Activated CD4-positive, alpha-beta T cell treated with anti-CD3 and anti-CD28 coated beads for 36 hours (primary cell): ENCODE measurements at regions of chr1 and their contacts with region 1.

Region 1: DNA sequence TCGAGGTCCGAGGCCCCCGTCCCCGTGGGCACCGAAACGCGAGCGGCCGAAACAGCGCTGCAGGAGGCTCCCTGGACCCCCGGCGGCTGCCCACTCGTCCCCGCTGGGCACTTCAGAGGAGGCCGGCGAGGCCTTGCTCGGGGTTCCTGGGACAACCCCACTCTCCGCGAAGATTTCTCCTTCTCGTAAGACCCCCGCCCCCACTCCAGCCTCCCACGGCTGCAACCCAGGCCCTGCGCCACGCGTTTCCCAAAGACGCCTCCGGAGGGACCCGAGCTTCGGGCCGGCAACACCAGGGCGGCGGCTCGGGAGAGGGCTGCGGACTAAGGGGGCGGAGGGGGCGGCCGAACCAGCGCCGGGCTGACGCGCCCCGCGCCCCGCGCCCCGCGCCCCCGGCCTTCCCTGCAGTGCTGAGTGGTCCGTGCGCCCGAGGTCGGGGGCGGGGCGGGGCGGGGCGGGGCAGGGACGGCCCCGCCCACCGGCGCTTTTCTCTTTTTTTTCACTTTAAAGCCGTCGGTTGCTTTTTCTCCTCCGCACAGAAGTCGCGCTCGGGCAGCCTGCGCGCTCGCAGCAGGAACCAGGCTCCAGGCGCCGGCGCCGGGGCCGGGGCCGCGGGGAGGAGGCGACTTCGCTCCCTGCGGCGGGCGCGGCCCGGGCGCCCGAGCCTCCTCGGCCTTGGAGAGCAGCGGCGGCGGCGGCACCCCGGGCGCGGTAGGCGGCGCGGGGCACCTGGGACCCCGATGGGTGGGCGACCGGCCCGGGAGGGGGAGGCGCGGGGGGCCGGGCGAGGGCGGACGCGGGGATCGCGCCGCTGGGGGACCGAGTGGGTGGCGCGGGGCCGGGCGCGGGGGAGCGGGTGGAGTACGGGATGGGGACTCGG is at the start of gene SPSB1:
- DNase-seq: peak; percentile 84
- ATAC-seq: peak; percentile 40
- H3K4me3 Mint-ChIP-seq: peak within 1 kb of the TSS; percentile 39
- H3K27ac Mint-ChIP-seq: no peak within 1 kb of the TSS
- H3K4me1 Mint-ChIP-seq: peaks cover 11% of the 10 kb centered on the region
- H3K27me3 Mint-ChIP-seq: no peaks in the 10 kb centered on the region
- total RNA-seq, gene SPSB1: 5.7 to 6.8 TPM

Region 2: DNA sequence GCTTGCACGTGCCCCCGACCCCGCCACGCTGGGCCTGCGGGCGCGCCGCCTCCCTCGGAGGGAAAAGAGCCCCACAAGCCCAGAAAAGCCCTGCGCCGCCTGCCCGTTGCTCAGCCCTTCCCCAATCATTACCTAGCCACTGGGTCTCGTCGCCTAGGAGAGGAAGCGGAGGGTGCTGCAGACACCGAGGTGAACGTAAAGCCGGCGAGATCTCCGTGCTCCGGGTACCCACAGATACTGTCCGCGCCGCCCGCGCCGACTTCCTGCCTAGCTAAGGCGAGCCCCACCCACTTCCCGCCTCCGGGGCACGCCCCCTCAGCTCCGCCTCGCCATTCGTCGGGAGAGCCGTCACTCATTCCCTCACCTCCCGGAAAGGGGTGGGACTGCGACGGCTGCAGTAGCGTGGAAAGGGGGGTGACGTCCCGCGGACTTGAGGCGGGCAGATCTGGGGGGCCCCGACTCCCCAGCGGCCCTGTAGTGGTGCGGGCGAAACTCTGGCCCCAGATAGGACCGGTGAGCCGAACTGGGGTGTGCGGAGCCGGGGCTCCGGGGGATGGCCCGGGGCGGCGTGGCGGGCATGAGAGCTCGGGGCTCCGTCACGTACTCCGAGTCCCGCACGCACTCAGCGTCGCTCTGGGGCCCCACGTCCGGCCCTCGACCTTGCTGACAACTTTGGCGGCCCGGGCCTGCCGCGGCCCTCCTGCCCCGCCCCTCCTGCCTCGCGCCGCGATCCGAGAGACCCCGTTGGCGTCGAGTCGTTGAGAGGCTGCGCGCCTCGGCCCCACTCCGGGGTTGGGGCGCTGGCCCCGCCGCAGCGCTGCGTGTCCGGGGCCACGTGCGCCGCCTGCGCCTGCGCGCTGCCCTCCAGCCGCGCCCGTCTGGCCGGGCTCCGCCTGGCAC is 413.9 kb before region 1 on chr1 and contains the start of gene ENO1:
- CTCF ChIA-PET with region 1: no interaction called
- POLR2A ChIA-PET with region 1: no interaction called
- intact Hi-C with region 1: loop called in 1 of 2 experiments (anchors 2 kb)
- DNase-seq: peak; percentile 99
- ATAC-seq: peak; percentile 72
- H3K4me3 Mint-ChIP-seq: peak within 1 kb of the TSS; percentile 90
- H3K27ac Mint-ChIP-seq: peak within 1 kb of the TSS; percentile 99
- H3K4me1 Mint-ChIP-seq: peaks cover 35% of the 10 kb centered on the region
- H3K27me3 Mint-ChIP-seq: no peaks in the 10 kb centered on the region
- total RNA-seq, gene ENO1: 2,573 to 3,583 TPM

Region 3: DNA sequence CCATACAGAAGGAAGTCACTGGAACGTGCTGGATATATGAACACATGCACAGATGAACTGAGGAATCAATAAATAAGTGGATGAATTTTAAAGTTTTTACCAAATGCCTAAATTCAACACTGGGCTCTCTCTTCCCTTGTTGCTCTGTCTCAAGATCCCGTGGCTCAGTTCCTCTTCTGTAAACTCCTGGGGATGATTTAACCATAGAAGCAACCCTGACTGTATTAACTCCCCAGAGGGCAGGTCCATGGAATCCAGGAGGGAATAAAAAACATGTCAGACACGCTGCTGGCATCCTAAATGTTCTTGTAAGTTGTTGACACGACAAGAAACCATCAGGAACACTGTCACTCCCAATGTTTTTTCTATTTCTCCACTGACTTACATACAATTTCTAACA is 118.4 kb before region 1 on chr1:
- CTCF ChIA-PET with region 1: no interaction called
- POLR2A ChIA-PET with region 1: no interaction called
- intact Hi-C with region 1: no loop called
- DNase-seq: no peak
- ATAC-seq: no peak
- H3K4me3 Mint-ChIP-seq: no peak overlapping the region
- H3K27ac Mint-ChIP-seq: no peak overlapping the region
- H3K4me1 Mint-ChIP-seq: no peaks in the 10 kb centered on the region
- H3K27me3 Mint-ChIP-seq: peaks cover 8% of the 10 kb centered on the region

Region 4: DNA sequence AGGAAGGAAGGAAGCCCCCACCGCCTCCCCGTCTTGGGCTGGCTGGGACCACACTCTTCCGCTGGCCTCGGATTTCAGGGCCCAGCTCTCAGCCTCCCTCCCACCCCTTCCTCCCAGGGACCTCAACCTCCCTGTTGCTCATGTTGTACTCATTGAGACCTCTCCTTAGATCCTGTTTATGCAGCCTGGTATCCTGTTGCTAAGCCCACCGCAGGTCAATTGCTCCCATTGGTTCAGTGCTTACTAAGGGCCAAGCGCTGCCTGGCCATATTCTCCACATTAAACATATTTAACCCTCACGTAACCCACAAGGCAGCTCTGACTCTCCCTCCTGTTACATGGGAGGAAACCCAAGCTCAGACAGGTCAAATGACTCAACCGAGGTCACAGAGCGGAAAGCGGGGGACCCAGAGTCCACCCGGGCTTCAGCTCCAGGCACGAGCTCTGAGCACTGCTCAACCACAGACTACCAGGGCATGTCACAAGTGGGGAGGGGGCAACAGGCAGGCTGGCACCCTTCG is 81.2 kb before region 1 on chr1:
- CTCF ChIA-PET with region 1: no interaction called
- POLR2A ChIA-PET with region 1: no interaction called
- intact Hi-C with region 1: no loop called
- DNase-seq: no peak
- ATAC-seq: no peak
- H3K4me3 Mint-ChIP-seq: no peak overlapping the region
- H3K27ac Mint-ChIP-seq: no peak overlapping the region
- H3K4me1 Mint-ChIP-seq: peaks cover 4% of the 10 kb centered on the region
- H3K27me3 Mint-ChIP-seq: peaks cover 22% of the 10 kb centered on the region

Region 5: GRCh38 chr1:9269078-9269501 is 23.5 kb before region 1 on chr1:
- CTCF ChIA-PET with region 1: interaction called, 27 read pairs
- POLR2A ChIA-PET with region 1: no interaction called
- intact Hi-C with region 1: loop called (anchors 1 to 2 kb)
- DNase-seq: no peak
- ATAC-seq: no peak
- H3K4me3 Mint-ChIP-seq: no peak overlapping the region
- H3K27ac Mint-ChIP-seq: no peak overlapping the region
- H3K4me1 Mint-ChIP-seq: peaks cover 2% of the 10 kb centered on the region
- H3K27me3 Mint-ChIP-seq: no peaks in the 10 kb centered on the region

Region 6: GRCh38 chr1:9317591-9318417 is 25.2 kb after region 1 on chr1:
- CTCF ChIA-PET with region 1: interaction called, 8 read pairs
- POLR2A ChIA-PET with region 1: no interaction called
- intact Hi-C with region 1: loop called (anchors 1 kb)
- DNase-seq: peak; percentile 42
- ATAC-seq: no peak
- H3K4me3 Mint-ChIP-seq: peak overlapping the region; percentile 18
- H3K27ac Mint-ChIP-seq: peak overlapping the region; percentile 42
- H3K4me1 Mint-ChIP-seq: peaks cover 38% of the 10 kb centered on the region
- H3K27me3 Mint-ChIP-seq: no peaks in the 10 kb centered on the region

Region 7: GRCh38 chr1:9455487-9456234 is 163.1 kb after region 1 on chr1:
- CTCF ChIA-PET with region 1: interaction called, 37 read pairs
- POLR2A ChIA-PET with region 1: interaction called, 6 read pairs
- intact Hi-C with region 1: loop called (anchors 1 kb)
- DNase-seq: peak; percentile 84
- ATAC-seq: peak; percentile 80
- H3K4me3 Mint-ChIP-seq: no peak overlapping the region
- H3K27ac Mint-ChIP-seq: no peak overlapping the region
- H3K4me1 Mint-ChIP-seq: no peaks in the 10 kb centered on the region
- H3K27me3 Mint-ChIP-seq: no peaks in the 10 kb centered on the region

Region 8: DNA sequence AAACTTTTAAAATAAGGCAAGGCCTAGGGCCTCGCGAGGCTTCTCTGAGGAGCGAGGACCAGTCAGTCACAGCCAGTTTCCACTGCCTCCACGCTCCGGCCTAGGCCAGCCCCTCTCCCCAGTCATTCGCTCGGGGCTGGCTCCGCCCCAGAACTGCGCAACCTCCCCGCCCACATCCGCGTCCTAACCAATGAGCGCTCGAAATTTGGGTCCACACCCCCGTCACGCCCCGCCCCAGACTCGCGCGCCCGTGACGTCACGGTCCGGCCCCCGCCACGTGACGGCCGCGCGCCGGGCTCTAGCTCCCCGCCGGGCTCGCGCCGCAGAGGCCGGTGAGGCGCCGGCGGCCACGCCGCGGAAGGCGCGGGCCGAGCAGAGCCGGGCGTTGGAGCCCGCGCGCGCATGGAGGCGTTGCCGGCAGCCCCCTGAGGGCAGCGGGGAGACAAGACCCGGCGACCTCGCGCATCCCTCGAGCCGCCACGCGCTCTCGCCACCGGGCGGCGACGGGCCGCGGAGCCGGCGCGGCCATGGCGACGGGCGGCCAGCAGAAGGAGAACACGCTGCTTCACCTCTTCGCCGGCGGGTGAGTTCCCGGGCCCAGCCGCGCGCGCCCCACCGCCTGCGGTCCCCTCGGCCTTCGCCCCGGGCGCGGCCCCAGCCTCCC is 246.7 kb after region 1 on chr1 and contains the start of gene SLC25A33:
- CTCF ChIA-PET with region 1: interaction called, 3 read pairs
- POLR2A ChIA-PET with region 1: no interaction called
- intact Hi-C with region 1: loop called in 1 of 2 experiments (anchors 1 kb)
- DNase-seq: peak; percentile 99
- ATAC-seq: peak; percentile 99
- H3K4me3 Mint-ChIP-seq: peak within 1 kb of the TSS; percentile 80
- H3K27ac Mint-ChIP-seq: peak within 1 kb of the TSS; percentile 78
- H3K4me1 Mint-ChIP-seq: peaks cover 30% of the 10 kb centered on the region
- H3K27me3 Mint-ChIP-seq: no peaks in the 10 kb centered on the region
- total RNA-seq, gene SLC25A33: 4.4 to 6.1 TPM